ENCODE measurements at regions of chr1 and their contacts with region 1.

Region 1: DNA sequence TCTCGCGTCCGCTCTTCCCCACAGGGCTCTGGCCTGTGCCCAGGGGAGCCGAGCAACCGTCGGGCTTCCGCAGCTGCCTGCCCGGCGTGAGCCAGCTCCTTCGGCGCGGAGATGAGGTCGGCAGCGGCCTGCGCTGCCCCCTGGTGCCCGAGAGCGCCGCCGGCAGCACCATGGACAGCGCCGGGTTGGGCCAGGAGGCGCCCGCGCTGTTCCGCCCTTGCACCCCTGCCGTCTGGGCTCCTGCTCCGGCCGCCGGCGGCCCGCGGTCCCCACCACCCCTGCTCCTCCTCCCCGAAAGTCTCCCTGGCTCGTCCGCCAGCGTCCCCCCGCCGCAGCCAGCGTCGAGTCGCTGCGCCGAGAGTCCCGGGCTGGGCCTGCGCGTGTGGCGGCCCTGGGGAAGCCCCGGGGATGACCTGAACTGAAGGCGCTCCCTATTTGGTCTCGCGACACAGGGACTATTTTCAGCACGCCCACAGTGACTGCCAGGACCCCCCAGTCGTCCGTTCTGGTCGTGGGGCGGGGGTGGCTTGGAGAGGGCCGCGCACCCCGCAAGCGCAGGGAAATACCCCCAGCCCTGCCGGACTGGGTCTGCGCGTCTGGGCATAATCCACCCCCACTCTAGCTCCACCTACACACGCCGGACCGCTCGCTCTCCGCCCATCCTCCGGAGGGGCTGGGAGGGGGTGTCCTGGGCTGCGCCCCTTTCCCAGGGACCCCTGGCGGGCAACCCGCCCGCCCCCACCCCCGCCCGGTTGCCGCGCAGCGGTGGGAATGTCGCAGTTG is 1.3 kb downstream of the HES3 start:
- DNase-seq: peak; percentile 95

Region 2: DNA sequence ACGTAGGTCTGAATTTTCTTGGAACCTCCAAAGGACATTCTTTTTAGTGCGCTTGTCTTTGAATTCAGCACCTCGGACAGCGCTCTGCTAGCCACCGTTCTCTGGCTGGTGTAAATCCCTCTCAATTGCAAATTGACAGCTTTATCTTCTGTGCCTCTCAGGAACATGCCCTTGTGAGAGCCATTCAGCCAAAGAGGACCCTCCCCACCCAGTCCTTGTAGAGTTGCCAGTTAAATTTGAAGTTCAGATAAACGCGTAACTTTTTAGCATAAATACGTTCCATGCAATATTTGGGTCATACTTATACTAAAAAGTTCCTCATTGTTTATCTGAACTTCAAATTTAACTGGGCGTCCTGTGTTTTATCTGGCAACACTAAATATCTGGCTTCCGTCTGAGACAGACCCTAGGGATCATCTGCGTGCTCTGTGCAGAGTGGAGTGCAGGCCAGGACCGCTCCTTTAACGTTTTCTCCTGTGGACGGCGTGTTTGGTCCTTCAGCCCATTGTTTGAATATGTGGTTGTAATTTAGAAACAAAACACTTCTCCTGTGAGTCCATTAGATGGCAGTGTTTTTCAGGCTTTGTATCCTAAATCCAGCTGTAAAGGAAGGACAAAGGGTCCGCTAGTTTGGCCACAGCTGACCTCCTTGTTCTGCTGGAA is 192.6 kb before region 1 on chr1:
- intact Hi-C with region 1: loop called in 1 of 2 experiments (anchors 10 kb)
- DNase-seq: no peak

Region 3: GRCh38 chr1:6331543-6332273 is 86.4 kb after region 1 on chr1:
- intact Hi-C with region 1: no loop called
- DNase-seq: no peak

Region 4: GRCh38 chr1:6343506-6344405 is 98.5 kb after region 1 on chr1:
- intact Hi-C with region 1: loop called (anchors 1 to 2 kb)
- DNase-seq: no peak

Region 5: DNA sequence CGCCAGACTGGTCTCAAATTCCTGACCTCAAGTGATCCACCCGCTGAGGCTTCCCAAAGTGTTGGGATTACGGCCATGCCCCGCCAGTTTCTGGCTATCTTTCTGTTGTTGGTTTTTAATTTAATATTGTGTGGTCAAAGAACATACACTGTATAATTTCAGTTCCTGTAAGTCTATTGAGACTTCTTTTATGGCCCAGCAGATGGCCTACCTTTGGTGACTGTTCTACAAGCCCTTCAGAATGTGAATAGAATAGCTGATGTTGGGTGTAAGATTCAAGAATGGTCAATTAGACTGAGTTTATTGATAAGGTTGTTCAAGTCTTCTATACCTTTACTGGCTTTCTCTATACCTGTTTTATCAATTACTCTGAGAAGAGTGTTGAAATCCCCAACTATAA is 163.8 kb after region 1 on chr1:
- intact Hi-C with region 1: loop called in 1 of 2 experiments (anchors 5 kb)
- DNase-seq: no peak

Measured in posterior vena cava (tissue), 2 donors.